ENCODE measurements at regions of chrX and their contacts with region 1.

Region 1: GRCh38 chrX:17527135-17527701 is 152.2 kb downstream of the NHS start:
- DNase-seq: peak; percentile 35
- ATAC-seq: peak; percentile 28; the same call in 1 of the 2 replicates
- H3K4me3 ChIP-seq: no peak overlapping the region
- H3K27ac ChIP-seq: peak overlapping the region; percentile 42; the same call in 1 of the 2 replicates
- H3K4me1 ChIP-seq: peaks cover 9% of the 10 kb centered on the region
- H3K27me3 ChIP-seq: no peaks in the 10 kb centered on the region
- CTCF ChIP-seq: no peak
- POLR2A ChIP-seq: no peak
- RAD21 ChIP-seq: no peak

Region 2: GRCh38 chrX:17242470-17242869 is 284.7 kb before region 1 on chrX:
- CTCF ChIA-PET with region 1: interaction called, 3 read pairs
- POLR2A ChIA-PET with region 1: no interaction called
- dilution Hi-C with region 1: no loop called
- in situ Hi-C with region 1: no loop called
- intact Hi-C with region 1: loop called (anchors 5 kb)
- DNase-seq: peak; percentile 55
- ATAC-seq: peak; percentile 88
- H3K4me3 ChIP-seq: no peak overlapping the region
- H3K27ac ChIP-seq: no peak overlapping the region
- H3K4me1 ChIP-seq: no peaks in the 10 kb centered on the region
- H3K27me3 ChIP-seq: peaks cover 6% of the 10 kb centered on the region
- CTCF ChIP-seq: peak; percentile 76
- POLR2A ChIP-seq: no peak
- RAD21 ChIP-seq: peak; percentile 70